ENCODE measurements at regions of chr11 and their contacts with region 1.

Region 1: GRCh38 chr11:60831143-60831500 is 10.8 kb upstream of the CCDC86 start:
- DNase-seq: peak; percentile 88
- H3K4me3 Mint-ChIP-seq: no peak overlapping the region
- H3K27ac Mint-ChIP-seq: no peak overlapping the region
- H3K4me1 Mint-ChIP-seq: peaks cover 13% of the 10 kb centered on the region
- H3K27me3 Mint-ChIP-seq: peaks cover 34% of the 10 kb centered on the region

Region 2: GRCh38 chr11:60700689-60701480 is 130.2 kb before region 1 on chr11:
- CTCF ChIA-PET with region 1: no interaction called
- DNase-seq: no peak
- H3K4me3 Mint-ChIP-seq: no peak overlapping the region
- H3K27ac Mint-ChIP-seq: no peak overlapping the region
- H3K4me1 Mint-ChIP-seq: no peaks in the 10 kb centered on the region
- H3K27me3 Mint-ChIP-seq: peaks cover 5% of the 10 kb centered on the region

Region 3: DNA sequence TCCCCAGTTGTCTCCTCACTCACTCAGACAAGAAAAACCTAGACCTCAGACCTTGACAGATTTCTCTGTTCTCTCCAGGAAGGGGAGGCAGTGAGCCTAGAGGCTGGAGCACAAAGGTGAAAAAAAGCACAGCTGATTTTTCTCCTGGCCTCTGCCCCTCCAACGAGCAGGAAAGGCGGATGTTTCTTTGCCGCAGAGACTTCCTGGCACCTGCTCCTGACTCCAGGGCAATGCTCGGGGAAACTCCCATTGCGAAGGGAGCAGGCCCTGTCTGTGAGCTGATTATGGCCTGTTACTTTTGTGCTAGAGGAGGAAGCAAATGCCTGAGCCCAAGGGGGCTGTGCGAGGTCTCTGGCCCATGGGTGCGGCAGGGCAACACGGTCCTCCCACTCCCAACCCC is 20.6 kb before region 1 on chr11:
- CTCF ChIA-PET with region 1: no interaction called
- DNase-seq: no peak
- H3K4me3 Mint-ChIP-seq: no peak overlapping the region
- H3K27ac Mint-ChIP-seq: no peak overlapping the region
- H3K4me1 Mint-ChIP-seq: peaks cover 7% of the 10 kb centered on the region
- H3K27me3 Mint-ChIP-seq: peaks cover 16% of the 10 kb centered on the region

Region 4: GRCh38 chr11:60841797-60842667 is 10.9 kb after region 1 on chr11 and contains the start of gene CCDC86:
- CTCF ChIA-PET with region 1: interaction called, 47 read pairs
- DNase-seq: peak; percentile 98
- H3K4me3 Mint-ChIP-seq: peak within 1 kb of the TSS; percentile 87
- H3K27ac Mint-ChIP-seq: peak within 1 kb of the TSS; percentile 90
- H3K4me1 Mint-ChIP-seq: peaks cover 47% of the 10 kb centered on the region
- H3K27me3 Mint-ChIP-seq: peaks cover 9% of the 10 kb centered on the region

Region 5: GRCh38 chr11:60887556-60887955 is 56.4 kb after region 1 on chr11:
- CTCF ChIA-PET with region 1: interaction called, 178 read pairs
- DNase-seq: peak; percentile 71
- H3K4me3 Mint-ChIP-seq: no peak overlapping the region
- H3K27ac Mint-ChIP-seq: no peak overlapping the region
- H3K4me1 Mint-ChIP-seq: peaks cover 3% of the 10 kb centered on the region
- H3K27me3 Mint-ChIP-seq: no peaks in the 10 kb centered on the region

Region 6: DNA sequence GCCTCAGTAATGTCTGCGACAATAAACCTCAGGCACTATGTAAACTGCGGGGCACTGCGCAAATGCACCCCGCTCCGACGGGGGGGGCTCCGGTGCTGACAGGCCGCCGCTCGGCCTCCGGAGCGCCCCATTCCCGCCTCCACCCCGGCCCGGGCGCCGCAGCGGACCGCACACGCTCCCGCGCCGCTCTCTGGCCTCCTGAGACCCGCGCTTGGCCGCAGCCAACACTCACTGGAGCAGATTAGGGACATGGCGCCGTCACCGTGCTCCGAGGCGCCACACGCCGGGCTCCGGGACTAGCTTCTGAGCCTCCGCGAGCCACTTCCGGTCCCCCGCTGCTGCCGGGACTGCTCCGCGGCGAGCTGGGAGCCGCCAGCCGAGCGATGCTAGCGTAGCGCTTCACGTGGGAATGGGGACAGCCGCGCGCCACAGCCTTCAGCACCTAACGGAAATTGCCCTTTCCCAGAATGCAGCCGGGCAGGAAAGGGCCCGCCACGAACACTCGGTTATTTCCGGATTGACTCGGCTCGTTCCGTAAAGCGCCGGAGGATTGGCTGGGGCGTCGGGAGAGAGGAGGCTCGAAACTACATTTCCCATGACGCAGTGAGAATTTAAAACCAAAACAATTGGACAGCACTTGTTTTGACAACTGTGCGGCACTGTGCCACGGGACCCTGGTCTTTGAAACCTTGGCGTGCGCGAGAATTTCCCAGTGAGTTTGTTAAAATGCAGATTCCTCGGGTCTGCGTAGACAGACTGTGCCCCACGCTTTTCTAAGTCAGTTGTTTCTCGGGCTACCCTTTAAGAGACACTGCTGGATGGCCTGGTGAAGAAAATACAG is 75.2 kb after region 1 on chr11 and contains the start of gene PRPF19:
- CTCF ChIA-PET with region 1: interaction called, 100 read pairs
- DNase-seq: peak; percentile 99
- H3K4me3 Mint-ChIP-seq: peak within 1 kb of the TSS; percentile 79
- H3K27ac Mint-ChIP-seq: peak within 1 kb of the TSS; percentile 93
- H3K4me1 Mint-ChIP-seq: peaks cover 42% of the 10 kb centered on the region
- H3K27me3 Mint-ChIP-seq: peaks cover 22% of the 10 kb centered on the region

Region 7: GRCh38 chr11:61187505-61188130 is 356.5 kb after region 1 on chr11:
- CTCF ChIA-PET with region 1: interaction called, 65 read pairs
- DNase-seq: peak; percentile 86
- H3K4me3 Mint-ChIP-seq: no peak overlapping the region
- H3K27ac Mint-ChIP-seq: no peak overlapping the region
- H3K4me1 Mint-ChIP-seq: peaks cover 2% of the 10 kb centered on the region
- H3K27me3 Mint-ChIP-seq: peaks cover 7% of the 10 kb centered on the region

Measured in activated naive CD4-positive, alpha-beta T cell treated with anti-CD3 and anti-CD28 coated beads, Interleukin-2, amount 10 ng/mL, durations not matched to agents 7 days and 5 days (primary cell).